ENCODE measurements at regions of chr1 and their contacts with region 1.

Region 1: DNA sequence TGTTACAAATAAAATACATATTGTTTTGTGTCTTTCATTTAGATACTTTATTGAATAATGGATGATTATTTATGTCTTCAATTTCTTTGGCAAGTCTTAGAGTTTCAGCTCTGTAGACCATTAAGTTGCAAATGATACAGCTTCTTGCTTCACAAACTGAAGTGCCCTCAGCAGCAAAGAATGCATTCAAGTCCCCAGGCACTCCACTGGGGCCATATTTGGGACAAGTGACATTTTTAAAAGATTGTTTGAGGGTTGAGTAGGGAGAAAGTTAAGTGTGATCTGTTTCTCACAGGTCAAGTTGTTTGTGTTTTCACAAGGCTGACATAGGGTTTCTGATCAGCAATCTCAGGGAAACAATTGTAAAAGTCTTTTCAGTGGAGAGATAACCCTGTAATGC is 400.7 kb downstream of the PLA2G4A start:
- DNase-seq: no peak

Region 2: GRCh38 chr1:187067160-187067559 is 162.3 kb before region 1 on chr1:
- intact Hi-C with region 1: no loop called
- DNase-seq: no peak

Region 3: DNA sequence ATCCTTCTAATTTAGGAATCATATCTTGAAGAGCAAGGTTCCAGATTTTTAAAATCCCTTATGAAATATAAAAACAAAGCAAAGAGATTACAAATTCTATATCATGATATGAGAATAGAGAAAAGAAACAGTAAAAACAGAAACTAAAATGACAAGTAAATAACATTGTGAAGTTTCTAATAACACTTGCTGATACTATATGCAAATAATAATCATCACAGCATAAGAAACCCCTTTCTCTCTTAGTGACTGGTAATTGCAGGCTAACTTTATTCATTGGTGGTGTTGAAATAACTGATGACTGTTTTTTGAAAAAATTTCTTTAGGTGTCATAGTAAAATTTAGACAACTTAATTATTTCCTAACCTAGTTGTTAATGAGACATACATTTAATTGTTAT is 119.1 kb before region 1 on chr1:
- intact Hi-C with region 1: no loop called
- DNase-seq: no peak

Region 4: GRCh38 chr1:187203257-187203656 is 26.2 kb before region 1 on chr1:
- intact Hi-C with region 1: loop called in 1 of 2 experiments (anchors 2 kb)
- DNase-seq: no peak

Region 5: GRCh38 chr1:187264995-187265602 is 35.6 kb after region 1 on chr1:
- intact Hi-C with region 1: no loop called
- DNase-seq: no peak

Measured in posterior vena cava (tissue), 2 donors.